Activated B cell treated with CpG ODN at 0.5 μM for 24 hours (primary cell): ENCODE measurements at regions of chr16 and their contacts with region 1.

Region 1: GRCh38 chr16:3305109-3306068 is at the starts of genes TIGD7 and ZNF75A:
- DNase-seq: peak; percentile 83
- ATAC-seq: peak; percentile 91
- H3K4me3 Mint-ChIP-seq: peak within 1 kb of the TSS; percentile 88
- H3K27ac Mint-ChIP-seq: peak within 1 kb of the TSS; percentile 88
- H3K4me1 Mint-ChIP-seq: peaks cover 26% of the 10 kb centered on the region
- H3K27me3 Mint-ChIP-seq: no peaks in the 10 kb centered on the region
- CTCF ChIP-seq: no peak
- total RNA-seq, gene TIGD7: 6.7 and 11.0 TPM in 2 replicates
- total RNA-seq, gene ZNF75A: 84.0 and 97.9 TPM in 2 replicates

Region 2: DNA sequence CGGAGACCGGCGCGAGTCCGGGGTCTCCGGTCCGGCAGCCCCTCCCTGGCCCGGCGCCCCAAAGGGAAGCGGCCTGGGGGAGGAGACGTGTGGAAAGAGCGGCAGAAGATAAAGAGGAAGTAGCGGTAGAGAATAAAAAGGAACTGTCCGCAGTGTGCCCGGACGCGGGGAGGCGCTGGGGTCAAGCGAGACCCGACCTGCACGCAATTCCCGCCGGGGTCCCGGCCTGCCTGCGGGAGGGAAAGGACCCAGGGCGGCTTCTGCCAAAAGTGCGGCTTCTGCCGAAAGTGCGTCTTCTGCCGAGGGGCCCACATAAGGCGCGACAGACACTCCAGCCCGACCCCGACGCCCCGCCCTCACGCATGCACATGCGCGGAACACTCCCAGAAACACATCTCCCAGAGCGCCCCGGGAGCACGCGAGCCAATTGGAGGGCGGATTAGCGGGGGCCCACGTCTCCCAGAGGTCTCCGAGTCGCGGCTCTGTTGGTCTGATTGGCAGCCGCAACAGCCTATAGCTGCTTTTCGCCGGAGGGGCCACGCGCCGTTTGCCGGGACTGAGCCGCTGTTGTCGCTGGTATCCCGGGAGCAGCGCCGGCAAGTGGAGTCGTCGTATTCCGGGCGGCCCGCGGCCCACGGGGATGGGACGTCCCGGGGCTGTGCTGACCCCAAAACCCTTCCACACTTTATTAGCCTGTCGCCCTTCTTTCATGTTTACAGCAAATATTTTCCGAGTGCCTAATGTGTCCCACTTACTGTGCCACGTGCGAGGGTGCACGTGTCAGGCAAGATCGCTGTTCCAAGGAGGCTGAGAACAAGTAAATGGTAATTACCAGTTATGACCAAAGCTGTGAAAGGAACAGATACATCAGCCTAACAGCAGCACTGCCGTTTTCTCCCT is 41.0 kb before region 1 on chr16:
- CTCF ChIA-PET with region 1: no interaction called
- POLR2A ChIA-PET with region 1: interaction called, 7 read pairs
- intact Hi-C with region 1: loop called (anchors 1 kb)
- DNase-seq: peak; percentile 95
- ATAC-seq: peak; percentile 89
- H3K4me3 Mint-ChIP-seq: peak overlapping the region; percentile 89
- H3K27ac Mint-ChIP-seq: peak overlapping the region; percentile 95
- H3K4me1 Mint-ChIP-seq: peaks cover 27% of the 10 kb centered on the region
- H3K27me3 Mint-ChIP-seq: no peaks in the 10 kb centered on the region
- CTCF ChIP-seq: no peak

Region 3: DNA sequence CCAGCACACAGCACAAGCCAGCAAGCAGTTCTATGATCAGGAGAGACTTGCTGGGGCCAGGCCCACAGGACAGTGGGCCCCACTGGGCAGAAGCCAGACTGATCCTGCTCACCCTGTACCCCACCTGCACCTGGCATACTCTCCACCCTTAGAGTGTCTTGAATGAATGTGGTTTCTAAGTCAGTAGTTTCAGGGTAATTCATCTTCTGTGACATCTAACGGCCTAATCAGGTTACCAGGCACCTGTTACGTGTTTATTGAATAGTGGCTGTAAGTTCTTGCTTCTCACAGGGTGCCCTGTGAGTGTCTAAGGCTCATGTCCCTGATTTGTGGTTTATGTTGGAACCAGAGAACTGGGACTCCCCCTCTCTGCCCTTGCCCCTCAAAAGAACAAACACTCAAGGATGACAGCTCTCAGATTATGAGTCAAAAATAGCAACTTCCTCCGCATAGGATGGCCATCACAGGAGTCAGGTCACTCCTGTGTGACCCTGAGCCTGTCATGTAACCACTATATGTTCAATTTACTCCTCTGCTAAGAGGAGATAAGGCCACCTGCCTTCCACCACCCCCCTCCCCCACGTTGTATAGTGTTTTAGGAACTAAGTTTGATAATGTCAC is 43.3 kb after region 1 on chr16:
- CTCF ChIA-PET with region 1: no interaction called
- POLR2A ChIA-PET with region 1: no interaction called
- intact Hi-C with region 1: no loop called
- DNase-seq: no peak
- ATAC-seq: no peak
- H3K4me3 Mint-ChIP-seq: no peak overlapping the region
- H3K27ac Mint-ChIP-seq: no peak overlapping the region
- H3K4me1 Mint-ChIP-seq: peaks cover 5% of the 10 kb centered on the region
- H3K27me3 Mint-ChIP-seq: no peaks in the 10 kb centered on the region
- CTCF ChIP-seq: no peak

Region 4: DNA sequence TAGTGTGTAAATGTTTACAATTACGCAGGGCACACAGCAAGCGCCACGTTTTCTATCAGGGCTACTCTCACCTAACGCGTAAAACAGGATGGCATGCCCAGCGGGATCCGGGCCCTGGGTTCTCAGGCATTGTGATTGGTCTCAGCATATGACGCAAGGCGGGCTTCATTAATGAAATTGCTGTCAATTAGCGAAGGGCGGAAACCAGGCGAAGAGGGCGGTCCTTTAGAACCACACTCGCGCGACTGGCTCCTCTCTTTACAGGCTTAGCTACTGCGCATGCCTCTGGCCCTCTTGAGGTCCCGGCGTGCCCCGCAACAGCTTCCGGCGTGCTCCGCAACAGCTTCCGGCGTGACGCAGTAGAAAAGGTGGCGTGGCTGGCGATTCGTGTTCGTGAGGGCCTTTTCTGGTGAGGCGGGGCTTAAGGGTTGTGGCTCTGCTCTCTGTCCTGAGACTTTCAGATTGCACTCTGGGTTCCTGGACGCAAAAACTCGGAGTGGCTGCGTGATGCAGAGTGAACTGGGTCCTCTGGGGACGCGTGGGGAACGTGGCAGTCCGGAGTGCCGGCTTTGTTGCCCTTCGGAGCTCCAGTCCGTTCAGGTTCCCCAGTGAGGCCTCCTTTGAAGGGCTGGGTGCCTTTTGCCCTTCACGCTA is 59.5 kb after region 1 on chr16:
- CTCF ChIA-PET with region 1: no interaction called
- POLR2A ChIA-PET with region 1: interaction called, 8 read pairs
- intact Hi-C with region 1: loop called (anchors 5 kb)
- DNase-seq: peak; percentile 65
- ATAC-seq: peak; percentile 95
- H3K4me3 Mint-ChIP-seq: peak overlapping the region; percentile 82
- H3K27ac Mint-ChIP-seq: peak overlapping the region; percentile 84
- H3K4me1 Mint-ChIP-seq: peaks cover 12% of the 10 kb centered on the region
- H3K27me3 Mint-ChIP-seq: peaks cover 9% of the 10 kb centered on the region
- CTCF ChIP-seq: no peak

Region 5: GRCh38 chr16:3457434-3458252 is 152.3 kb after region 1 on chr16:
- CTCF ChIA-PET with region 1: no interaction called
- POLR2A ChIA-PET with region 1: interaction called, 6 read pairs
- intact Hi-C with region 1: loop called (anchors 2 kb)
- DNase-seq: peak; percentile 91
- ATAC-seq: peak; percentile 90
- H3K4me3 Mint-ChIP-seq: peak overlapping the region; percentile 82
- H3K27ac Mint-ChIP-seq: peak overlapping the region; percentile 85
- H3K4me1 Mint-ChIP-seq: peaks cover 44% of the 10 kb centered on the region
- H3K27me3 Mint-ChIP-seq: no peaks in the 10 kb centered on the region
- CTCF ChIP-seq: no peak